Posterior vena cava (tissue), 2 donors: ENCODE measurements at regions of chr2 and their contacts with region 1.

Region 1: GRCh38 chr2:205089958-205090357 is 544.7 kb downstream of the PARD3B start:
- DNase-seq: no peak

Region 2: DNA sequence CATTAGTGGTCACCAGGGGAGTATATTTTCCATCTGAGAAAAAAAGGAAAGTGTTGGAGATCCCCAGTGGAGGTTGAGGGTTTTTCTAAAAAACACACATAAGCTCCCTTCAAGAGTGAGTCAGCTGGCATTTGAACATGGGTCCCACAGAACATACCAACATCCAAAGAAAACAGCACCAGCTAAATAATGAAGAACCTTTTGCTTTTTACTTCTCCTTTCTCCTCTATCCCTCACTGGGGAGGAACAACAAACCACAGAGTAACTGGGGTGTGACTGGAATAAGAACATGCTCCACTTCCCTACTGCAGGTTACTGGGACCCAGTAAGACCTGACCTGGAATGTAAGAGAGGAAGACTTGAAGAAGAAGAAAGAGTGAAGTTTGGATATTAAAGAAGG is 1498.3 kb before region 1 on chr2:
- intact Hi-C with region 1: loop called in 1 of 2 experiments (anchors 5 kb)
- DNase-seq: no peak

Region 3: GRCh38 chr2:205474741-205475415 is 384.9 kb after region 1 on chr2:
- intact Hi-C with region 1: no loop called
- DNase-seq: no peak